ENCODE measurements at regions of chr6 and their contacts with region 1.

Region 1: GRCh38 chr6:109382576-109383437 is 540 bp upstream of the CD164 start:
- DNase-seq: peak; percentile 90 to 97 (median 96)
- ATAC-seq: peak; percentile 82
- H3K4me3 ChIP-seq: peak overlapping the region; percentile 89
- H3K4me3 Mint-ChIP-seq: peak overlapping the region; percentile 88 to 99 (median 98)
- H3K27ac ChIP-seq: peak overlapping the region; percentile 95
- H3K27ac Mint-ChIP-seq: peak overlapping the region; percentile 92 to 100 (median 99)
- H3K4me1 ChIP-seq: peaks cover 22 to 32% of the 10 kb centered on the region in 2 donors
- H3K4me1 Mint-ChIP-seq: peaks cover 34 to 58% (median 51%) of the 10 kb centered on the region in 7 donors
- H3K27me3 ChIP-seq: no peaks in the 10 kb centered on the region
- H3K27me3 Mint-ChIP-seq: peaks cover 0 to 7% (median 0%) of the 10 kb centered on the region in 5 donors

Region 2: GRCh38 chr6:107820338-107821261 is 1562.2 kb before region 1 on chr6:
- CTCF ChIA-PET with region 1: no interaction called
- POLR2A ChIA-PET with region 1: no interaction called
- intact Hi-C with region 1: loop called (anchors 5 kb)
- DNase-seq: peak in 8 of 9 donors; percentile 13 to 62 (median 51)
- ATAC-seq: peak; percentile 9
- H3K4me3 ChIP-seq: peak overlapping the region; percentile 76
- H3K4me3 Mint-ChIP-seq: peak overlapping the region; percentile 85 to 98 (median 95)
- H3K27ac ChIP-seq: peak overlapping the region; percentile 95
- H3K27ac Mint-ChIP-seq: peak overlapping the region; percentile 96 to 100 (median 99)
- H3K4me1 ChIP-seq: peaks cover 57 to 59% of the 10 kb centered on the region in 2 donors
- H3K4me1 Mint-ChIP-seq: peaks cover 45 to 83% (median 81%) of the 10 kb centered on the region in 7 donors
- H3K27me3 ChIP-seq: no peaks in the 10 kb centered on the region
- H3K27me3 Mint-ChIP-seq: no peaks in the 10 kb centered on the region

Region 3: DNA sequence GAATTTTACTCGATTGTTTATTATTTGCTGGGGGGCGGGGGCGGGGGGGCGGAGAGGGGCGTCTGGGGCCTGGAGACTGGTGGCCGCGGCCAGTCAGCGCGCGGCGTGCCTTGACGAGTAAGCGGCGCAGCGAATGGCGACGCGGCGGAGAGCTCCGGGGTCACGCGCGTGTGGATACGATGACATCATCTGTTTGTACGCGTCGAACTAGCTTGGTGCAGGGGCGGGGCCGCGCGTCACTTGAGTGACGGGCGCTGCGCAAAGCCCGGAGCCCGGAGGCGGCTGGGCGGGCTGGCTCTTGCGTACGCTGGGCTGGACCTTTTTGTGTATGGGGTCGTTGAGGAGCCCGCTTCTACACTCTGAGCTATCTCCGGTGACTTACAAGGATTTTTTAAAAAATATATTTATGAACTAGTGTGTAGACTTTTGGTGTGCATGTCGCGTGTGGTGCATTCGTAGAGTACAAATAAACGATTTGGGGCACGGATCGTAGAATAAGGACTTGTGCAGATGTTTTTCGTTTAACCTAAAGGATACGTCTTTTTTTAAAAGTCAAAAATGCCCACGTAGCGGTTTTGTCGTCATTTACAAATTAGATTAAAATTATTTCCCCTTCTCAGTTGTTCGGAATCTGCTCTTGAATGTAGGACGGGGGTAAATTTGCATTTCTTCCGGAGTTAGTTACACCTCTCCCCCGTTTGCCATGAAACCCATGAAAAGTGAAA is 824.3 kb before region 1 on chr6:
- CTCF ChIA-PET with region 1: no interaction called
- POLR2A ChIA-PET with region 1: interaction called, 10 read pairs
- intact Hi-C with region 1: loop called (anchors 1 kb)
- DNase-seq: peak; percentile 91 to 98 (median 97)
- ATAC-seq: peak; percentile 75
- H3K4me3 ChIP-seq: peak overlapping the region; percentile 75
- H3K4me3 Mint-ChIP-seq: peak overlapping the region; percentile 88 to 98 (median 97)
- H3K27ac ChIP-seq: peak overlapping the region; percentile 100
- H3K27ac Mint-ChIP-seq: peak overlapping the region; percentile 87 to 99 (median 97)
- H3K4me1 ChIP-seq: peaks cover 12 to 13% of the 10 kb centered on the region in 2 donors
- H3K4me1 Mint-ChIP-seq: peaks cover 16 to 28% (median 20%) of the 10 kb centered on the region in 7 donors
- H3K27me3 ChIP-seq: no peaks in the 10 kb centered on the region
- H3K27me3 Mint-ChIP-seq: peaks cover 0 to 55% (median 6%) of the 10 kb centered on the region in 5 donors

Region 4: DNA sequence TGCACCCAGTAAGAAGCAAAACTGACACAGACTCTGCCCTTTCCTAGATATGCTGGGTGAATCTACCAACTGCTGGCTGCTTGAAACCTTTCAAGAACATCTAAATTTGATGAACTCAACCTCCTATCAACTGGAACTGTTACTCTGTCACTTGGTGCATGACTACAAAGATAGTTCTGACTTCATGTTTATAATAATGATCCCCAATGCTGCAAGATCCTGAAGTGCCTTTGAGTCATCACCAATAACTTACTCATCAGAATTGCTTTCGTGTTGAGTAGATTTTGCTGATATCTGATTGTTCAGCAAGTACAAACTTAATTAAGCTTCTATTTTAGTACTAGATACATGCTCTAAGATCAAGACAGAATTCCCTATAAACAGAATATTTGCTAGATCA is 634.8 kb before region 1 on chr6:
- CTCF ChIA-PET with region 1: no interaction called
- POLR2A ChIA-PET with region 1: no interaction called
- intact Hi-C with region 1: no loop called
- DNase-seq: no peak
- ATAC-seq: no peak
- H3K4me3 ChIP-seq: no peak overlapping the region
- H3K4me3 Mint-ChIP-seq: no peak overlapping the region
- H3K27ac ChIP-seq: no peak overlapping the region
- H3K27ac Mint-ChIP-seq: no peak overlapping the region
- H3K4me1 ChIP-seq: no peaks in the 10 kb centered on the region
- H3K4me1 Mint-ChIP-seq: peaks cover 0 to 2% (median 0%) of the 10 kb centered on the region in 7 donors
- H3K27me3 ChIP-seq: peaks cover 0 to 3% of the 10 kb centered on the region in 2 donors
- H3K27me3 Mint-ChIP-seq: peaks cover 11 to 33% (median 13%) of the 10 kb centered on the region in 5 donors

Region 5: GRCh38 chr6:109009236-109009961 is 373.4 kb before region 1 on chr6:
- CTCF ChIA-PET with region 1: no interaction called
- POLR2A ChIA-PET with region 1: no interaction called
- intact Hi-C with region 1: loop called (anchors 1 to 5 kb)
- DNase-seq: peak; percentile 85 to 91 (median 90)
- ATAC-seq: peak; percentile 98
- H3K4me3 ChIP-seq: peak overlapping the region; percentile 84
- H3K4me3 Mint-ChIP-seq: peak overlapping the region; percentile 91 to 99 (median 96)
- H3K27ac ChIP-seq: peak overlapping the region; percentile 99
- H3K27ac Mint-ChIP-seq: peak overlapping the region; percentile 94 to 100 (median 98)
- H3K4me1 ChIP-seq: peaks cover 22 to 40% of the 10 kb centered on the region in 2 donors
- H3K4me1 Mint-ChIP-seq: peaks cover 26 to 81% (median 72%) of the 10 kb centered on the region in 7 donors
- H3K27me3 ChIP-seq: no peaks in the 10 kb centered on the region
- H3K27me3 Mint-ChIP-seq: peaks cover 0 to 3% (median 0%) of the 10 kb centered on the region in 5 donors

Region 6: DNA sequence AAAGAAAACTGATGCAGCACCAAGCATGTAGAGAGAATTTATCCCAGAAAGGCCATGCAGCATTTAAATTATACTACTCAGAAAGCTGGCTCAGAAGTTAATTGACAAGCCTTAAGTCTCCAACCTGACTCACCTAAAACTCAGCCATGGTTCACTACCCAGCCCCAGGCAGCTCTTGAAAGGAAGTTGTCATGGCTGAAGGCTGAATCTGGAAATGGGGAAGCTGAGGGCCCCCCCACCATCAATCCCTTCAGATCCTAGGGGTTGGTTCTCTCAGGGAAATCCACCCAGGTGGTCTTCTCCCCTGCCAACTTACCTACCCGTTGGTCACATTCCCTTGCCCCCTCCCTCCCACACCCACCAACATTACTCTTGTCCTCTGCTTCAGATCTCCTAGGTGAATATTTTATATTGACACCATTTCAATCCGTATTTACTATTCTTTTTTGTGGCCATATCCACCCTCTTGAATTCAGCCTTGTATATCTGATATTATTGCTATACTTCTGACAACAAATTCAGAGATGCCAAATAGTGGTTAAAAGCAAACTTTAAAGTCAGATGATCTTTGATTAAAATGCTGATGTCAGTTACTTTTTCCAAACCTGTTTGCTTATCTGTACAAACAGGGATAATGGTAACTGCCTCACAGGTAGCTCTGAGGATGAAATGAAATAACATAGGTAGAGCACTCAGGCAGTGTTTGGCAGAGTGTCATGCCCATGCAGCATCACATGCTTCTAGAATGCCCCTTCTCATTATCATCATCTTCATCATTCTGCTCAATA is 38.2 kb after region 1 on chr6:
- CTCF ChIA-PET with region 1: no interaction called
- POLR2A ChIA-PET with region 1: no interaction called
- intact Hi-C with region 1: no loop called
- DNase-seq: no peak
- ATAC-seq: no peak
- H3K4me3 ChIP-seq: no peak overlapping the region
- H3K4me3 Mint-ChIP-seq: no peak overlapping the region
- H3K27ac ChIP-seq: no peak overlapping the region
- H3K27ac Mint-ChIP-seq: no peak overlapping the region
- H3K4me1 ChIP-seq: no peaks in the 10 kb centered on the region
- H3K4me1 Mint-ChIP-seq: peaks cover 0 to 6% (median 0%) of the 10 kb centered on the region in 7 donors
- H3K27me3 ChIP-seq: no peaks in the 10 kb centered on the region
- H3K27me3 Mint-ChIP-seq: peaks cover 0 to 17% (median 0%) of the 10 kb centered on the region in 5 donors

Region 7: DNA sequence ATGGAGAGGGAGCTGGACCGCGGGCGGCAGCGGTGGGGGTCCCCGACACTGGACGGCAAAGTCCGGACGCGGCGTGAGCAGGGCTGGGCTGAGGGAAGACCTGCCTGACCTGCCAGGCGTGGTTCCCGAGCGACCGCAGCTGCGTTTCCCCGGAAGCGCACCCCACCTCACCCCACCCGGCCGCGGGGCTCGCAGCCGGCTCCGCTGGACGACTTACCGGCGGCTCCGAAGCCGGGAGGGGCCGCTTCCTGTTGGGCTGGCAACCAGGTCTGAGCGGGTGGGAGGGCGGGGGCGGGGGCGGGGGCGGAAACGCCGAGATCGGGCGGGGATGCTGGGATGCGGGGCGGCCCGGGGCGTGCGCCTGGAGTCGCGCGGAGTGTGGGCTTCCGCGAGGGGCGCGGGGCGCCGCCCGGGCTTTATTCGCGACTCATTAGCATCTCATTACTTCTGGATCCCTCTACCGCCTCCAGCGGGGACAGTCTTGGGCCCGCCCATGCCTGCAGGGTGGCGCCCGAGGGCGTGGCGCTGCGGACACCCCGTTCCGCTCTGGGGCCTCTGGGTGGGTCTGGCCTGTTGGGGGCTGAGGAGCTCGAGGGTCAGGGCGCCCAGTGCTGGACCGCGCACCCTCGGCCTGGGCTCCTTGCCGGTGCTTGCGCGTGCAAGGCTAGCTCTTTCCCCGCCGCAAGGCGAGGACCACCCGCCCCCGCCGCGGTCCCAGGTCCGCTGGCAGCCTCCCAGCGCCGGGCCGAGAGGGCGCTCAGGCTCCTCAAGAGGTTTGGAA is 72.9 kb after region 1 on chr6 and contains the start of gene MICAL1:
- CTCF ChIA-PET with region 1: interaction called, 4 read pairs
- POLR2A ChIA-PET with region 1: interaction called, 40 read pairs
- intact Hi-C with region 1: loop called (anchors 1 kb)
- DNase-seq: peak; percentile 55 to 79 (median 72)
- ATAC-seq: peak; percentile 82
- H3K4me3 ChIP-seq: peak within 1 kb of the TSS; percentile 81
- H3K4me3 Mint-ChIP-seq: peak within 1 kb of the TSS; percentile 95 to 99 (median 97)
- H3K27ac ChIP-seq: peak within 1 kb of the TSS; percentile 94
- H3K27ac Mint-ChIP-seq: peak within 1 kb of the TSS; percentile 83 to 99 (median 97)
- H3K4me1 ChIP-seq: peaks cover 40 to 45% of the 10 kb centered on the region in 2 donors
- H3K4me1 Mint-ChIP-seq: peaks cover 29 to 68% (median 62%) of the 10 kb centered on the region in 7 donors
- H3K27me3 ChIP-seq: no peaks in the 10 kb centered on the region
- H3K27me3 Mint-ChIP-seq: no peaks in the 10 kb centered on the region
- total RNA-seq, gene MICAL1: 61.4 to 125 (median 78.7) TPM

Region 8: GRCh38 chr6:110179401-110180227 is 796.8 kb after region 1 on chr6 and contains the start of gene WASF1:
- CTCF ChIA-PET with region 1: interaction called, 3 read pairs
- POLR2A ChIA-PET with region 1: interaction called, 5 read pairs
- intact Hi-C with region 1: loop called (anchors 1 kb)
- DNase-seq: peak; percentile 84 to 94 (median 91)
- ATAC-seq: peak; percentile 96
- H3K4me3 ChIP-seq: peak within 1 kb of the TSS; percentile 83
- H3K4me3 Mint-ChIP-seq: peak within 1 kb of the TSS in 6 of 10 donors; percentile 84 to 90 (median 88)
- H3K27ac ChIP-seq: peak within 1 kb of the TSS; percentile 90
- H3K27ac Mint-ChIP-seq: peak within 1 kb of the TSS in 8 of 9 donors; percentile 2 to 87 (median 66)
- H3K4me1 ChIP-seq: peaks cover 17 to 23% of the 10 kb centered on the region in 2 donors
- H3K4me1 Mint-ChIP-seq: peaks cover 4 to 8% (median 5%) of the 10 kb centered on the region in 7 donors
- H3K27me3 ChIP-seq: peaks cover 0 to 7% of the 10 kb centered on the region in 2 donors
- H3K27me3 Mint-ChIP-seq: peaks cover 8 to 21% (median 9%) of the 10 kb centered on the region in 5 donors
- total RNA-seq, gene WASF1: 0.19 to 4.7 (median 0.51) TPM

Region 9: DNA sequence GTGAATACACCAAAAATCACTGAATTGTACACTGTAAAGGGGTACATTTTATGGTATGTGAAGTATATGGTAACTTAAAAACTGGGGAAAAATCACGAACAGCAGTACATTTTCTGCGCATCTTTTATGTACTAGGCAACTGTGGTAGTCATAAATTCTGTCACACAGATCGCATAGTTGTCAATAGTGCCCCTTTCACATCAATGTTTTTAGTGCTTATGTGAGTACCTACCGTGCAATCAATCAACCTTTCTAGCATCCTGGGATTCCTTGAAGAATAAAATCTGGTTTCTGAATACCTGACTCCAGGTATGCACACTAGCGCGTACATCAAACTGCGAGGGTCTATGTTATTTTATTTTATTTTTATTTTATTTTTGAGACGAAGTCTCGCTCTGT is 1598.4 kb after region 1 on chr6:
- CTCF ChIA-PET with region 1: no interaction called
- POLR2A ChIA-PET with region 1: no interaction called
- intact Hi-C with region 1: loop called (anchors 2 to 5 kb)
- DNase-seq: peak in 1 of 9 donors; percentile 28
- ATAC-seq: no peak
- H3K4me3 ChIP-seq: peak overlapping the region; percentile 81
- H3K4me3 Mint-ChIP-seq: peak overlapping the region; percentile 95 to 99 (median 98)
- H3K27ac ChIP-seq: peak overlapping the region; percentile 92
- H3K27ac Mint-ChIP-seq: peak overlapping the region; percentile 96 to 100 (median 99)
- H3K4me1 ChIP-seq: peaks cover 0 to 11% of the 10 kb centered on the region in 2 donors
- H3K4me1 Mint-ChIP-seq: peaks cover 19 to 46% (median 35%) of the 10 kb centered on the region in 7 donors
- H3K27me3 ChIP-seq: no peaks in the 10 kb centered on the region
- H3K27me3 Mint-ChIP-seq: no peaks in the 10 kb centered on the region

Measured in naive thymus-derived CD4-positive, alpha-beta T cell (primary cell).